ENCODE measurements at regions of chr2 and their contacts with region 1.

Region 1: DNA sequence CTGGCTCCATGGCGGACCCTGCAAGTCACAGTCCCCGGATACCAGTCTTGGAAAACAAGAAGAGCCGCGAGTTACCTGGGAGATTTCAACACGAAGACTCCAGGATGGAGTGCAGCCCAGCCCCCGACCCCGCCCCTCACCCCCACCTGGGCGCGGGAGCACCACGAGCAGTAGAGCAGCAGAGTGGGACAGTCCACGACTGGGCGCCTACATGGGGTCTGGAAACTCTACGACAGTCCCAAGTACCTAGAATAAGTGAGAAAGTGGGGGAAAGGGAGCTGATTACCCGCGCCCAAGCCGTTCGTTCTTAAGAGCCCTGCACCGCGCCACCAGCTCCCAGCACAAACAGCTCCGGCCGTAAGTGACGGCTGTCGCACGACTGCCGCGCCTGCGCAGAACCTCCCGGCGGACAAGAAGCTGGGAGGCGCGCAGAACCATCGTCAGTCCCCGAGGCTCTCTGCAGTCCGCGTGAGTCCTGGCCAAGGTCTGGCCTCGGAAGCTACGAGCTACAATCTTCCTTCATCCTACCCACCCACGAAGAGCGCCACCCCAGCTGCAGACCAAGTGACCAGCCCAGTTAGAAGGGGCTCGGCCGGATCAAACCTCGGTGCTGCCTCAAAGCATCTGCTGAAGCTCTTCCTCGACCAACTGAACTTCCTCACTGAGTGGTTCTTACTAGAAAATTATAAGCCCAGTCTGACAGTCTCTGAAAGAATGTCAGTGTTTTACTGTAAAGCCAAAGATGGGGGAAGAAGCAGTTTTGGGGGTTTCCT is at the start of gene DPY30:
- DNase-seq: peak; percentile 86
- ATAC-seq: peak; percentile 90
- H3K4me3 ChIP-seq: peak within 1 kb of the TSS; percentile 73 to 96
- H3K27ac ChIP-seq: peak within 1 kb of the TSS; percentile 66
- H3K4me1 ChIP-seq: peaks cover 5 to 18% of the 10 kb centered on the region in 2 experiments; a peak in 3 of 4 replicates
- H3K27me3 ChIP-seq: no peaks in the 10 kb centered on the region
- CTCF ChIP-seq: no peak
- POLR2A ChIP-seq: peak; percentile 99
- RAD21 ChIP-seq: peak; percentile 16; the same call in 1 of the 2 replicates
- total RNA-seq, gene DPY30: 79.5 TPM

Region 2: DNA sequence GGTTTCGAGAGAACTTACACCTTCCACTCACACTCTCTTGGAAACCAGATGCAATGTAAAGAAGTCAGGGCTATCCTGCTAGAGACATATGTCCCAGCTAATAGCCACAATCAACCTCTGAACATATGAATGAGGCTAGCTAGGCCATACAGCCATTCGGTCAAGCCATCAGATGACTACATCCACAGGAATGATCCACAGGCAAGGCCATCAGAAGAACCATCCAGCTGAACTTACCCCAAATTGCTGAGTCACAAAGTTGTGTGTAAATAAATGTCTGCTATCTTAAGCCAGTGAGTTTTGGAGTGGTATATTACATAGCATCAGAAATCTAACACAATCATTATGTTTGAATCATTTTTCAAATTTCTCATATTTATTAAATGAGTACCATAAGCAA is 18.5 kb after region 1 on chr2:
- CTCF ChIA-PET with region 1: interaction called, 5 read pairs
- POLR2A ChIA-PET with region 1: interaction called, 20 read pairs
- RAD21 ChIA-PET with region 1: interaction called in 1 of 2 experiments, 4 read pairs
- intact Hi-C with region 1: no loop called
- DNase-seq: no peak
- ATAC-seq: no peak
- H3K4me3 ChIP-seq: no peak overlapping the region
- H3K27ac ChIP-seq: no peak overlapping the region
- H3K4me1 ChIP-seq: peaks cover 0 to 18% of the 10 kb centered on the region in 2 experiments; a peak in 2 of 4 replicates
- H3K27me3 ChIP-seq: no peaks in the 10 kb centered on the region
- CTCF ChIP-seq: no peak
- POLR2A ChIP-seq: no peak
- RAD21 ChIP-seq: no peak

Measured in HCT116 (cell line).